GM18951 (cell line): ENCODE measurements at regions of chr13 and their contacts with region 1.

Region 1: GRCh38 chr13:31044377-31045285 is 112.2 kb downstream of the TEX26 start:
- POLR2A ChIP-seq: no peak

Region 2: GRCh38 chr13:30865123-30866049 is 179.2 kb before region 1 on chr13:
- in situ Hi-C with region 1: loop called (anchors 10 kb)
- POLR2A ChIP-seq: no peak